CD8-positive, alpha-beta T cell (primary cell): ENCODE measurements at regions of chr7 and their contacts with region 1.

Region 1: DNA sequence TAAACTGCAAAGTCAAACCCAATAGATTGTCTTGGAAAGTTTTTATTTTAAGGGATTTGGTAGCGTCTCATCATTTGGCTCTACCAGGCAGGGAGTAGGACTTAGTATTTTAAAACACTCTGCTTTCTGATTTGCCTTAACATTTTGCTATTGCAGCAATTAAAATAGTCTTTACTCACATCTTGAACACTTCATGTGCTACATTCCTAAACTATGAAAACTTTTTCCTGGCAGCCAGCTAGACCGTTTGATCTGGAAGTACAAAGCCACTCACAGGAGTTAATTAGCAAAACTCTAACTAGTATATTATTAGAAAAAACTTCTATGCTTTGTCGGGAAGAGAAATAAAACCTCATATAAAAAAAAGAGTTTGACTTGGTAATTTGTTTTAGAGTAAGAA is 111.4 kb downstream of the TFPI2 start:
- DNase-seq: no peak
- ATAC-seq: no peak
- H3K4me3 ChIP-seq: no peak overlapping the region
- H3K4me3 Mint-ChIP-seq: no peak overlapping the region
- H3K27ac ChIP-seq: no peak overlapping the region
- H3K27ac Mint-ChIP-seq: no peak overlapping the region
- H3K4me1 ChIP-seq: no peaks in the 10 kb centered on the region
- H3K4me1 Mint-ChIP-seq: no peaks in the 10 kb centered on the region
- H3K27me3 ChIP-seq: no peaks in the 10 kb centered on the region
- H3K27me3 Mint-ChIP-seq: no peaks in the 10 kb centered on the region
- CTCF ChIP-seq: no peak

Region 2: DNA sequence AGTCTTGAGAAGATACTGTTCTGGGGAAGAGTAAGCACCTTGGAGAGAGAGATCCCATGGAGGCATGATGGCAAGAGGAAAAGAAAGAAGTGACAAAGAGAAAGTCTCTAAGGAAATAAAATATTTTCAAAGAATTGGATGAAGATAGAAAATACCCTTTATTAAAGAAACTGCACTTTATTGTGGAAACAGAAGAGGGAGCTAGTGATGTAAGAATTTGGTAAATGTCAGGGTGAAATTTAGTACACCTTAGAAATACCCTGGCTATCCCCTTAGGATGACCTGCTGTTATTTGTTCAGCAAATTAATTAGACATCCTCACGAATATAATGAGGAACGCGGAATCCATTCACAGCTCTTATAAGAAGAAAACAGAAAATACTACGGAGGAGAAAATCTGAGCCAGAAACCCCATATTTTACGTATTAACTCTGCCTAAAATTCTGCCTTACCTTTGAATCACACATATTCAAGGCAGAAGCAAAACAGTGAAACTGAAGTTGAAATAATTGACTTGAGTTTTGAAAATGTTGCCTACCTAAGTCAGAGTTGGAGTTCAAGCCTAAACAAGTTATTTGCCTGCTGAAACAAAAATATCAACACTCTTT is 20.7 kb after region 1 on chr7:
- CTCF ChIA-PET with region 1: no interaction called
- POLR2A ChIA-PET with region 1: no interaction called
- intact Hi-C with region 1: loop called in 1 of 2 experiments (anchors 2 kb)
- DNase-seq: no peak
- ATAC-seq: no peak
- H3K4me3 ChIP-seq: no peak overlapping the region
- H3K4me3 Mint-ChIP-seq: no peak overlapping the region
- H3K27ac ChIP-seq: no peak overlapping the region
- H3K27ac Mint-ChIP-seq: no peak overlapping the region
- H3K4me1 ChIP-seq: no peaks in the 10 kb centered on the region
- H3K4me1 Mint-ChIP-seq: no peaks in the 10 kb centered on the region
- H3K27me3 ChIP-seq: no peaks in the 10 kb centered on the region
- H3K27me3 Mint-ChIP-seq: no peaks in the 10 kb centered on the region
- CTCF ChIP-seq: no peak